CD4-positive, alpha-beta memory T cell (primary cell): ENCODE measurements at regions of chr15 and their contacts with region 1.

Region 1: DNA sequence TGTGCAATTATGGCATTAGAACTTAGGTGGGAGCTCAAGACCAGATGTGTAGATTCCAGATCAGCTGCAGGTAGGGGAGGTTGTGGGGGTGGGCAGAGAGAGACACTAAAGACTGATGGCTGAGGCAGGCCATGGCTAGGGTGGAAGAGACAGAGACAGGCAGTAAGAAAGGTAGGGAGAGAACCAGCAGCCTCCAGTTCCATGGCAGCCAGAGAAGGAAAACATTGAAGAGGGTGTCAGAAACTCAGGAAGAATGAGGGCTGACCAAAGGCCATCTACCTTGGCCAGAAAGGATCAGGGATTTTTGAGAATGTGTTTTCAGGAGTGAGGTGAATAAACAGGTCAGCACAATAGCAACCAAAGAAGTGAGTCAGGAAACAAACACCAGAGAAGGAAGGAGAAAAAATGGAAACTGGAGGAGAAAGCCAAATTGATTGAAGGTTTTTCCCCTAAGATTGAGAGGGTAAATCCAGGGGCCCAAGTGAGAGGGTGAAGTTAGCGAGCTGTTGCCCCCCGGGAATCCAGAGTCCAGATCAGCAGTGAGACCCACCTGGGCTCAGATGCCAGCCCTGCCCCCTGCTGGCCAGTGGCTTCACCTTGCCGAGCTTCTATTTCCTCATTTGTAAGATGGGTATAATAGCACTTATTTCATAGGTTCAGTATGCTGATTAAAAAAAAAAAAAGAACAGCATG is 41.0 kb downstream of the ABHD2 start:
- DNase-seq: peak; percentile 44 to 52 (median 48)
- H3K4me3 ChIP-seq: no peak overlapping the region
- H3K4me3 Mint-ChIP-seq: no peak overlapping the region
- H3K27ac ChIP-seq: no peak overlapping the region
- H3K27ac Mint-ChIP-seq: no peak overlapping the region
- H3K4me1 ChIP-seq: peaks cover 24% of the 10 kb centered on the region
- H3K4me1 Mint-ChIP-seq: peaks cover 13 to 33% (median 18%) of the 10 kb centered on the region in 4 donors
- H3K27me3 ChIP-seq: no peaks in the 10 kb centered on the region
- H3K27me3 Mint-ChIP-seq: no peaks in the 10 kb centered on the region

Region 2: DNA sequence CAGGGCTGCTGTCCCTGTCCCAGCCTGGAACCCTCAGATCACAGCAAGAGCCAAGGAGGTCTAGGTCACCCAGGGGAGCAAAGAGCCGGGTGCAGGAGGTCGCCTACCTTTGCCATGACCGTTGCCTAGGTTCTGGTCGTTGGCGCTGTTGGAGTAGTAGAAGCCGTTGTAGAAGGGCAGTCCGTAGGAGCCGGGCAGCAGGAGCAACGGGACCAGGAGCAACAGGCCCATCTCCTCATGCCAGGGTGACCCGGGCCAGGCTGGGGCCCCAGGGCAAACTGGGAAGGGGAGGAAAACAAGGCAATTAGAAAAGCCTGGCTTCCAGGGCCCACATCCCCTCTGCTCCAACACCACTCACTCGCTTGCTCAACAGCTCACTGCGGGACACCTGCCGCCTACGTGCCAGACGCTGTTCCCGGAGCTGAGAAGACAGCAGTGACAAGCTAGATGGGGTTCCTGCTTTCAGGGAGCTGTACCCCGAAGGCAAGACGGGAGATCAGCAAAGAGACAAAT is 242.1 kb before region 1 on chr15:
- CTCF ChIA-PET with region 1: interaction called, 14 read pairs
- POLR2A ChIA-PET with region 1: no interaction called
- intact Hi-C with region 1: no loop called
- DNase-seq: no peak
- H3K4me3 ChIP-seq: no peak overlapping the region
- H3K4me3 Mint-ChIP-seq: peak overlapping the region in 1 of 8 donors; percentile 9
- H3K27ac ChIP-seq: no peak overlapping the region
- H3K27ac Mint-ChIP-seq: peak overlapping the region in 1 of 7 donors; percentile 19
- H3K4me1 ChIP-seq: peaks cover 3% of the 10 kb centered on the region
- H3K4me1 Mint-ChIP-seq: peaks cover 5 to 27% (median 10%) of the 10 kb centered on the region in 4 donors
- H3K27me3 ChIP-seq: no peaks in the 10 kb centered on the region
- H3K27me3 Mint-ChIP-seq: no peaks in the 10 kb centered on the region

Region 3: GRCh38 chr15:89034288-89034687 is 95.0 kb before region 1 on chr15:
- CTCF ChIA-PET with region 1: interaction called, 12 read pairs
- POLR2A ChIA-PET with region 1: no interaction called
- intact Hi-C with region 1: no loop called
- DNase-seq: peak in 1 of 5 donors; percentile 13
- H3K4me3 ChIP-seq: no peak overlapping the region
- H3K4me3 Mint-ChIP-seq: no peak overlapping the region
- H3K27ac ChIP-seq: no peak overlapping the region
- H3K27ac Mint-ChIP-seq: peak overlapping the region in 1 of 7 donors; percentile 11
- H3K4me1 ChIP-seq: no peaks in the 10 kb centered on the region
- H3K4me1 Mint-ChIP-seq: no peaks in the 10 kb centered on the region
- H3K27me3 ChIP-seq: no peaks in the 10 kb centered on the region
- H3K27me3 Mint-ChIP-seq: peaks cover 9 to 15% of the 10 kb centered on the region in 2 donors

Region 4: DNA sequence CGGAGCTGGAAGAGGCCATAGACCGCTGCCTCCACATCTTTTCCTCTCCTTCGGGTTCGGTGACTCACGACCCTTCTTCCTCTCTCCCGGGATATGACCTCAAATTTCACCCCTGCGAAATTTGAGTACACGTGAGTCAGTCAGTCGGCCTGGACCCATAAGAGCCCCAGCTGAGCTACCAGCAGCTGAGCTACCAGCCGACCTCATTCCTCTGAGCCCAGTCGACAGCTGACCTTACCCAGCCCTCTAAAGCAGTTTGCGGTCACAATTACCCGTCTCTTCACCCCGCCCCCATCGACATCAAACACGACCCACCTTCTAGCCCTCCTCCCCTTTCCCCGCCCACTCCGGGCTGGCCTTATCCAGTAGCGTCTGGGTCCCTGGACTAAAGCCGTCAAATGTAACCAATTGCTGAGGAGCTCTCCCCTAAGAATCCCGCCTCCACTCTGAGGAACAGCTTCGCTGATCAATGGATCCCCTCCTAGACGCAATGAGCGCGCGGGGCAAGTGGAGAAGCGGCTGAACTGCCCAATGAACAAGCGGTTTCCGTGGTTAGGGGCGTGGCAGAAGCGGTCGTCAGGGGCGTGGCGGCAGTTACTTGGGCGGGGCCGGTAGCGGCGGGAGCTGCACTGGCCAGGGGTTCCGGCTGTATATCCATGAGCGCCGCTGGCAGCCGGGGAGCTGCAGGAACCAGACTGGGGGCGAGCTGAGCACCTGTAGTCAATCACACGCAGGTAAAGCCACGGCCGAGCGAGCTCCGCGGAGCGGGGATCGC is 41.3 kb before region 1 on chr15 and contains the start of gene ABHD2:
- CTCF ChIA-PET with region 1: interaction called, 65 read pairs
- POLR2A ChIA-PET with region 1: interaction called, 16 read pairs
- intact Hi-C with region 1: loop called (anchors 1 kb)
- DNase-seq: peak; percentile 98 to 99 (median 98)
- H3K4me3 ChIP-seq: peak within 1 kb of the TSS; percentile 49 to 89
- H3K4me3 Mint-ChIP-seq: no peak within 1 kb of the TSS
- H3K27ac ChIP-seq: peak within 1 kb of the TSS; percentile 75
- H3K27ac Mint-ChIP-seq: peak within 1 kb of the TSS in 6 of 7 donors; percentile 57 to 98 (median 94)
- H3K4me1 ChIP-seq: peaks cover 38% of the 10 kb centered on the region
- H3K4me1 Mint-ChIP-seq: peaks cover 24 to 38% (median 32%) of the 10 kb centered on the region in 4 donors
- H3K27me3 ChIP-seq: no peaks in the 10 kb centered on the region
- H3K27me3 Mint-ChIP-seq: no peaks in the 10 kb centered on the region
- total RNA-seq, gene ABHD2: 65.4 to 68.9 TPM

Region 5: GRCh38 chr15:89112341-89112971 is 16.8 kb before region 1 on chr15:
- CTCF ChIA-PET with region 1: interaction called, 32 read pairs
- POLR2A ChIA-PET with region 1: no interaction called
- intact Hi-C with region 1: no loop called
- DNase-seq: no peak
- H3K4me3 ChIP-seq: no peak overlapping the region
- H3K4me3 Mint-ChIP-seq: peak overlapping the region in 3 of 8 donors; percentile 10 to 50 (median 46)
- H3K27ac ChIP-seq: no peak overlapping the region
- H3K27ac Mint-ChIP-seq: peak overlapping the region; percentile 24 to 78 (median 48)
- H3K4me1 ChIP-seq: peaks cover 25% of the 10 kb centered on the region
- H3K4me1 Mint-ChIP-seq: peaks cover 23 to 46% (median 33%) of the 10 kb centered on the region in 4 donors
- H3K27me3 ChIP-seq: no peaks in the 10 kb centered on the region
- H3K27me3 Mint-ChIP-seq: no peaks in the 10 kb centered on the region

Region 6: DNA sequence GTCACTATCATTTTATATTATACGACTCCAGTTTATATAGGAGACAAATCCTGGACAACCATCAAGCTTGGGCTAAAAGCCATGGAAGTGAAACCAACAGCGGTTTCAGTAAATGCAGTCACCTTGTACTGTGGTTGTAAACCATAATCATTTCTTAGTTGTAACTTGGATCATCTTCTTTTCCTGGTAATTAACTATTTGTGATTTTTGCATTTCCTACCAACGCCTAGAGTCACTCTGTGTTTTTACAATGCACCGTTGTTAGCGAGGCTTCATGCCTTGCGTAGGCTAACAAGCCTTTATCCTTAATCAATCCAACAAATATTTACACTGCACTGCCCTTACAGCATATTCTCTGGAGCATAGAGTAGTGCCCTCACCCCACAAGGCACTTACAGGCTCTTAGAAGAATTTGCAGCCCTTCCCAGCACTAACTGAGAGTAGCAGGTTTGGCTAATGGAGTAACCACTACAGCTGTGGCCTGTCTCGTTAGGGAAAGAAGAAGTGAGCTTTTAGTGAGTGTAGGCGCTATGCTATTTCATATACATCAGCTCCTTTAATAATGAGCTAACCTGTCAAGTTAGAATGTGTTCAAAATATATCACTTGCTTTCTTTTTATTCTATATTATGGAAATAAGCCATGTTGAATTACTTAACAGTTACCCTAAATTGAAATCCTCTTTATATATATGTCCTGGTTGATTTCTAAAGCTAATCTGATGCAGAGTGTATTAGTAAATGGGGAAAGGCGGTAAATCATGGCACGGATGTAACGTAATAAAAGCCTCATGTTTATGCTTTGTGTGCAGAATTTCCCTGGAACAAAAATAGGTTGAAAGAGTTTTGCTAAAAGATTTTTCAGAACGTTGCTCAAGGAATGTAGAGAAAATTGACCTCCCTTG is 21.7 kb after region 1 on chr15:
- CTCF ChIA-PET with region 1: interaction called, 13 read pairs
- POLR2A ChIA-PET with region 1: no interaction called
- intact Hi-C with region 1: no loop called
- DNase-seq: no peak
- H3K4me3 ChIP-seq: no peak overlapping the region
- H3K4me3 Mint-ChIP-seq: no peak overlapping the region
- H3K27ac ChIP-seq: no peak overlapping the region
- H3K27ac Mint-ChIP-seq: peak overlapping the region in 1 of 7 donors; percentile 35
- H3K4me1 ChIP-seq: no peaks in the 10 kb centered on the region
- H3K4me1 Mint-ChIP-seq: peaks cover 0 to 2% (median under 1%) of the 10 kb centered on the region in 4 donors
- H3K27me3 ChIP-seq: no peaks in the 10 kb centered on the region
- H3K27me3 Mint-ChIP-seq: no peaks in the 10 kb centered on the region

Region 7: DNA sequence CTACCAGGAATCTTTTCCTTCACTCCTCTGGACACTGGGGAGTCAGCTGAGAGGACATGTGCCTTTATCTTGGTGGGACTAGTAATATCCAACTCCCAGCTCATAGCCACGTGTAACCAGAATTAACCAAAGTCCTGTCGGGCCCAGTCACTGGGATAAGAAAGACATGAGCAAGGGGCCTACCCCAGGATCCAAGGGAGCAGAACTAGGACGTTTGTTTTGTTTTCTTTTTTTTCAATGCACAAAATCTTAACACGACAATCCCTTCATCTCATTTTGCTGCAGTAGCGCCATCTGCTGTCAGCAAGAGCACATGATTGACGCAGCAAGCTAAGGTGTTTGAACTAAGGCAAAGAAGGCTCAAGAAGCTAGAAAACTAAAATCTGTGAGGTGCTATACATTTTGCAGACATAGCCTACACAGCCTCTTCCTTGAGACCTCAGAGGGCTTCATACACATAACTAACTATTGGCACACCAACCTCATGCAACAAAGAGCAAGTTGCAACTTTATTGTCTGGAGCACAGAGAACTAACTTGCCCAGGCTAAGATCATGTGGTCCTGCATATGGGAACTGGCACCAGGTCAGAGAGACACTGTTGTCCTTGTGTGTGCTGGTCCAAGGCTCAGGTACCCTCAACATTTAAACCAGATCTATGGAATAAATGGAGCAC is 48.5 kb after region 1 on chr15:
- CTCF ChIA-PET with region 1: interaction called, 15 read pairs
- POLR2A ChIA-PET with region 1: no interaction called
- intact Hi-C with region 1: no loop called
- DNase-seq: peak; percentile 45 to 64 (median 55)
- H3K4me3 ChIP-seq: no peak overlapping the region
- H3K4me3 Mint-ChIP-seq: no peak overlapping the region
- H3K27ac ChIP-seq: no peak overlapping the region
- H3K27ac Mint-ChIP-seq: peak overlapping the region in 4 of 7 donors; percentile 20 to 48 (median 30)
- H3K4me1 ChIP-seq: no peaks in the 10 kb centered on the region
- H3K4me1 Mint-ChIP-seq: peaks cover 4 to 8% (median 7%) of the 10 kb centered on the region in 4 donors
- H3K27me3 ChIP-seq: no peaks in the 10 kb centered on the region
- H3K27me3 Mint-ChIP-seq: no peaks in the 10 kb centered on the region